Activated T-helper 1 cell treated with anti-CD3 and anti-CD28 coated beads, Interleukin-12 subunit alpha, Interleukin-12 subunit beta, Interleukin-2, Interleukin-4 antibody, amounts not matched to agents 30 ng/mL and 10 ng/mL and 1 ng/mL, durations not matched to agents 14 hours and 24 hours and 36 hours (primary cell): ENCODE measurements at regions of chr11 and their contacts with region 1.

Region 1: DNA sequence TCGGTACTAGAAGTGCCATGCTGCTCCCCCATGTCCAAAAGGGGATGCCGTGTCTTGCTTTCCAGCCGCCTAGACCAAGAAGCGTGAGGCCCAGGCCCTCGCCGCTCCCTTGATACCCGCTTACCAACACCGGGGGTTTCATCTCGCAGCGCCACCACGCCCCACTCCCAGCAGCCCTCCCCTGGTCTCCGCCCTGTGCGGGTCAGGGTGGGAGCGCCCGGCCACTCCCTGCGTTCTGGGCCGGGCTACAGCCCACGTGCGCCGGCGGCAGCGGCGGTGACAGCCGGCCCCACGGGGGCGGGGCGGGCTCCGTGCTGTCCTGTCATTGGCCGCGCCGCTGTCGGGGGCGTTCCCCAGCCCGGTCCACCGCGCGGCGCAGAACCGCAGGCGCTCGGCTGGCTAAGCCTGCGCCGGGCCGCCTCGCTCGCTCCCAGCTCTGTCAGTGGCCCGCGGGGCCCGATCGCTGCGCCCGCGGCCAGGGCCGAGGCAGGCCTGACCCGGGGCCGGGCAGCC is at the start of gene MICAL2:
- DNase-seq: peak; percentile 90
- H3K4me3 Mint-ChIP-seq: peak within 1 kb of the TSS; percentile 90
- H3K27ac Mint-ChIP-seq: peak within 1 kb of the TSS; percentile 99
- H3K4me1 Mint-ChIP-seq: peaks cover 75% of the 10 kb centered on the region
- H3K27me3 Mint-ChIP-seq: no peaks in the 10 kb centered on the region
- total RNA-seq, gene MICAL2: 595 and 619 TPM in 2 replicates

Region 2: GRCh38 chr11:11748706-11749365 is 361.4 kb before region 1 on chr11:
- intact Hi-C with region 1: no loop called
- DNase-seq: no peak
- H3K4me3 Mint-ChIP-seq: no peak overlapping the region
- H3K27ac Mint-ChIP-seq: no peak overlapping the region
- H3K4me1 Mint-ChIP-seq: no peaks in the 10 kb centered on the region
- H3K27me3 Mint-ChIP-seq: peaks cover 30% of the 10 kb centered on the region

Region 3: DNA sequence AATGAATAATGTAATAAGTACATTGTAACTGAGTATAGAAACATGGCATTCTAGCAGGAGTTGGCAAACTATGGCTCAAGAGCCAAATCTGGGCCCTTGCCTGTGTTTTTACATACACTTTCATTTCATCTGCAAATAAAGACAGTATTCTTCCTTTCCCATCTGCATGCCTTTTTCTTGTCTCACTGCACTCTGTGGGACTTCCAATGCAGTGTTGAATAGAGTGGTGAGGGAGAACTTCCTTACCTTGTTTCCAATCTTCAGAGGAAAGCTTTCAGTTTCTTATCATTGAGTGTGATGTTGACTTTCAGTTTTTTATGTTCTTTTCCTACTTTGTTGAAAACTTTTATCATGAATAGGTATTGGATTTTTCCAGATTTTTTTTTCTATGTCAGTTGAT is 186.4 kb before region 1 on chr11:
- intact Hi-C with region 1: no loop called
- DNase-seq: no peak
- H3K4me3 Mint-ChIP-seq: no peak overlapping the region
- H3K27ac Mint-ChIP-seq: no peak overlapping the region
- H3K4me1 Mint-ChIP-seq: peaks cover 31% of the 10 kb centered on the region
- H3K27me3 Mint-ChIP-seq: no peaks in the 10 kb centered on the region

Region 4: GRCh38 chr11:12087075-12088004 is 22.9 kb before region 1 on chr11:
- intact Hi-C with region 1: loop called (anchors 1 kb)
- DNase-seq: peak; percentile 60
- H3K4me3 Mint-ChIP-seq: peak overlapping the region; percentile 58
- H3K27ac Mint-ChIP-seq: peak overlapping the region; percentile 85
- H3K4me1 Mint-ChIP-seq: peaks cover 75% of the 10 kb centered on the region
- H3K27me3 Mint-ChIP-seq: peaks cover 1% of the 10 kb centered on the region

Region 5: DNA sequence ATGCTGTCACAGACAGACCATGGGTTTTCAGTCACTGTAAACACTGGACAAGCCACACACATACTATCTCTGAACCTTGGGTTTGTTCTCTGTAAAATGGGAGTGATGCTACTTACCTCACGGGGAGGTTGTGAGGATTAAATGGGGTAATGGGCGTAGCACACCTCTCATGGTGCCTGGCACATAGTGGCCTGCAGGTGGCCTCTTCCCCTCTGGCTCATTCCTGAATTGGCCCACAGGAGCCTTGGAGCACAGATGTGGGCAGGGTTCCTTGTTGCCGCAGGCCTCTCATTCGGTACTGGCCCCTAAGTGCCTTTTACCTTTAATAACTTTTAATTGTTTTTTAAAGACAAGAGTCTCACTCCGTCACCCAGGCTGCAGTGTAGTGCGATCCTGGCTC is 11.8 kb after region 1 on chr11:
- intact Hi-C with region 1: loop called (anchors 1 kb)
- DNase-seq: no peak
- H3K4me3 Mint-ChIP-seq: no peak overlapping the region
- H3K27ac Mint-ChIP-seq: no peak overlapping the region
- H3K4me1 Mint-ChIP-seq: peaks cover 89% of the 10 kb centered on the region
- H3K27me3 Mint-ChIP-seq: no peaks in the 10 kb centered on the region

Region 6: DNA sequence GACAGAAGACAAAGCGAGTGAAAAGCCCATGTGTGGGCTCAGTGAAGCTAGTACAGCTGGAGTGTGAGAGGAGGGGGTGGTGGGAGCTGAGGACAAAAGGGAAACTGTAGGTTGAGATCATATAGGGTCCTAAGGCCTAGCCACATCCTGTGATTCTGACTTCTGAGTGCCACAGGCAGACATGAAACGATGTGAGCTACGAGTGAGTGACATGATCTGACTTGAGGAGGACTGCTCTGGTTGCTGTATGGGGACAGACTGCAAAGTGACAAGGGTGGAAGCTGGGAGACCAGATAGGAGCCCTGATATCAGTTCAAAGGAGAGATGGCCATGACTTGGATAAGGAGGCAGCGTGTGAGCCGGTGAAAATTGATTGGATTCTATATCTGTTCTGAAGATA is 85.5 kb after region 1 on chr11:
- intact Hi-C with region 1: loop called (anchors 1 kb)
- DNase-seq: peak; percentile 62
- H3K4me3 Mint-ChIP-seq: peak overlapping the region; percentile 97
- H3K27ac Mint-ChIP-seq: peak overlapping the region; percentile 96
- H3K4me1 Mint-ChIP-seq: peaks cover 69% of the 10 kb centered on the region
- H3K27me3 Mint-ChIP-seq: no peaks in the 10 kb centered on the region

Region 7: DNA sequence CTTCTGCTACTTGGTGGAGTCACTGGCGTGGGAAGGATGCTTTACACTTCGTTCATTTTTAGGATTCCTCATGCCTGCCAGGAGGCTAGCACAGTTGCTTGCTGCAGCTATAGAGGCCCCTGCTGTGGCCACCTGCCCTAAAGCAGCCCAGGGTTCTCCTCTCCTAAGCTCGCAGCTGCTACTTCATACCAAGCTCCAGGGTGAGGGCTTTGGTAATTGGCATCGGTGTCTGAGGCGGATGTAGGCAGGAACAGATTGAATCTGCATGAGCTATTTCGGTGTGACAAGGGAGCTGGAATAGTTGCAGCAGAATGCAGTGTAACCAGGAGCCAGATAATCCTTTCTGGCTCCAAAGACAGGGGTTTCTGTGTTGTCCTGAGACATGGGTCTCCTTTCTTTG is 133.2 kb after region 1 on chr11:
- intact Hi-C with region 1: no loop called
- DNase-seq: no peak
- H3K4me3 Mint-ChIP-seq: no peak overlapping the region
- H3K27ac Mint-ChIP-seq: peak overlapping the region; percentile 91
- H3K4me1 Mint-ChIP-seq: peaks cover 29% of the 10 kb centered on the region
- H3K27me3 Mint-ChIP-seq: no peaks in the 10 kb centered on the region